HepG2 (cell line): ENCODE measurements at regions of chr2 and their contacts with region 1.

Region 1: DNA sequence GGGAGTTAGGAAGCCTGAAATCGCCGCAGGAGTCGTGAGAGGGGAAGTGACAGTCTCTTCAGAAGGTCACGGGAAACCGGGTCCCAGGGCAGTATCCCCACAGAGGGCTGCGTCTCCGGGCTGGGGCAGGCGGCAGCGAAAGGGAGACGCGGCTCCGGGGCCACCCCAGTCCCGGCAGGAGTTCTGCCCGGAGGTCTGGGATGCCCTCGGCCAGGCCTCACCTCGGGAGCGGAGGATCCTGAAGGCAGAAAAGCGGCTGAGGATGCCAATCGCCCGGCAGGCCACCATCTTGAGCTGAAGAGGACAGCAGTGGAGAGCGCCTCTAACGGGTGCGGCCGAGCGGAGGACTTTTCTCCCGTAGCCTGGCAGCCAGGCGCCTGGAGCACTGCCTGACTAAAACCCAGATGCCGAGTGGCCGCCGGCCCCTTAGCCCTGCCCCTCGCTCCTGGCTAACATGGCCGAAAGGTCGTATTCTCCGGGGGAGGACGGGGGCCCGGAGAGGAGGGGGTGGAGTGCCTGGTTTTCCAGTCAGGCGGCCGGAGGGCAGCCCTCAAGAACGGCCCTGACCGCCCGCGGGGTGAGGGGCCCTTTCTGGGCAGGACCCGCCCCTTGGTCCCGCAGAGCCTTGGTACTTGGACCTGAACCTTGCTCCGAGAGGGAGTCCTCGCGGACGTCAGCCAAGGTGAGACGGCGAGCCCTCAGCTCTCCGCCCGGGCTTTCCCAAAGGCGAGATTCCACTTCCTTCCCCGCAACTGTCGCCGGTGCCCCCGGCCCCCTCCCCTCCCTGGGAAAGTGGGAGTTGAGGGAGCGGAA is at the starts of genes HADHA and HADHB:
- DNase-seq: peak; percentile 95
- ATAC-seq: peak; percentile 94
- H3K4me3 ChIP-seq: peak within 1 kb of the TSS; percentile 62 to 96 (median 94)
- H3K27ac ChIP-seq: peak within 1 kb of the TSS; percentile 91
- H3K4me1 ChIP-seq: peaks cover 59% of the 10 kb centered on the region
- H3K27me3 ChIP-seq: peaks cover 0 to 7% of the 10 kb centered on the region in 2 experiments; a peak in 2 of 5 replicates
- CTCF ChIP-seq: peak; percentile 57
- EP300 ChIP-seq: peak; percentile 49 to 52
- POLR2A ChIP-seq: peak; percentile 94 to 98
- RAD21 ChIP-seq: peak; percentile 14; the same call in 1 of the 2 replicates
- total RNA-seq, gene HADHA: 270 and 385 TPM in 2 replicates
- total RNA-seq, gene HADHB: 238 and 304 TPM in 2 replicates

Region 2: DNA sequence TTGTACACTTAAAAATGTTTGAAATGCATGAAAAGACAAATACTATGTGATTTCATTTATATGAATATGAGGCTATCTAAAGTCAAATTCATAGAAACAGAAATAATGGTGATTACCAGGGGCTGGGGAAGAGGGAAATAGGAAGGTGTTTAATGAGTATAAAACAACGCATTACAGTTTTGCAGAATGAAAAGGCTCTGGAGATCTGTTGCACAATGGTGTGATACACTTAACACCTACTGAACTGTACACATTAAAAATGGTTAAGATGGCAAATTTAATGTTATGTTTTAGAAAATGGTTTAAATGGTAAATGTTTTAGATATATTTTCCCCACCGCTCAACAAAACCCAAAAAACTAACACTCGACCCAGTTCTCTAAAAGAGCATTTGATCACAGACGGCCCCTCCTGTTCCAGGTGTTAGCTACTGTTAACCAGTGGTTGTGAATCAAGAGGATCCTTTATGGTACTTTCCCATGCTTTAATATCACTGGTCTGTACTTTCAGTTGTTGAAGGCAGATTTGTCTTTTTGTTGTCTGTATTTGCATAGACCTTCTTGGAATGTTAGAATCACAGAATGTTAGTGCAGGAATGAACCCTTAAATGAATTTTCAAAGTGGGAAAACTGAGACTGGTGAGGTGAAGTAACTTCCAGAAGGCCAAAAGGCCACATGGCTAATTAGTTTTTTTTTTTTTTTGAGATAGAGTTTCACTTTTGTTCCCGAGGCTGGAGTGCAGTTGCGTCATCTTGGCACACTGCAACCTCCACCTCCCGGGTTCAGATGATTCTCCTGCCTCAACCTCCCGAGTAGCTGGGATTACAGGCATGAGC is 200.4 kb before region 1 on chr2:
- CTCF ChIA-PET with region 1: no interaction called
- POLR2A ChIA-PET with region 1: no interaction called
- in situ Hi-C with region 1: no loop called
- intact Hi-C with region 1: no loop called
- DNase-seq: peak; percentile 54
- ATAC-seq: peak; percentile 45
- H3K4me3 ChIP-seq: peak overlapping the region in 1 of 3 experiments; percentile 2; a peak in 1 of 6 replicates
- H3K27ac ChIP-seq: peak overlapping the region; percentile 54
- H3K4me1 ChIP-seq: peaks cover 79% of the 10 kb centered on the region
- H3K27me3 ChIP-seq: no peaks in the 10 kb centered on the region
- CTCF ChIP-seq: no peak
- EP300 ChIP-seq: no peak
- POLR2A ChIP-seq: no peak
- RAD21 ChIP-seq: no peak

Region 3: GRCh38 chr2:26095758-26096157 is 148.8 kb before region 1 on chr2:
- CTCF ChIA-PET with region 1: no interaction called
- POLR2A ChIA-PET with region 1: no interaction called
- in situ Hi-C with region 1: no loop called
- intact Hi-C with region 1: no loop called
- DNase-seq: no peak
- ATAC-seq: no peak
- H3K4me3 ChIP-seq: no peak overlapping the region
- H3K27ac ChIP-seq: no peak overlapping the region
- H3K4me1 ChIP-seq: peaks cover 17% of the 10 kb centered on the region
- H3K27me3 ChIP-seq: no peaks in the 10 kb centered on the region
- CTCF ChIP-seq: no peak
- EP300 ChIP-seq: no peak
- POLR2A ChIP-seq: no peak
- RAD21 ChIP-seq: no peak

Region 4: DNA sequence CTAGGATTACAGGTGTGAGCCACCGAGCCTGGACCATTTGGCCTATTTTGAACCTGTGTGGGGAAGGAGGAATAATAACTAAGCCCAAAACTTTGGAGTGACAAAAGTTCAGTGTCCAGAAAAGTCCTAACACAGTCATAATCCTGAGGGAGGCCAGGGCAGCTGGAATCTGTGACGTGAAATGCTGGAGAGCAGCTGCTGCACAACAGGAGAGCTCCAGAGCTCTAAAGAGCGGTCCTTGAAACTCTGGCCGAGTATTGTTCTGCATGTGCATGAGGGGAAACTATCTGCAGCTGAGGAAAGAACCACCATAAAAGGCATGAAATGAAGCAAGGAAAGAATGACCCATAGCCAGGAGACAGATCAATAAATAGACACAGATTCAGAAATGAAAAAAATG is 27.9 kb before region 1 on chr2:
- CTCF ChIA-PET with region 1: no interaction called
- POLR2A ChIA-PET with region 1: no interaction called
- in situ Hi-C with region 1: no loop called
- intact Hi-C with region 1: no loop called
- DNase-seq: no peak
- ATAC-seq: no peak
- H3K4me3 ChIP-seq: no peak overlapping the region
- H3K27ac ChIP-seq: no peak overlapping the region
- H3K4me1 ChIP-seq: no peaks in the 10 kb centered on the region
- H3K27me3 ChIP-seq: no peaks in the 10 kb centered on the region
- CTCF ChIP-seq: no peak
- EP300 ChIP-seq: no peak
- POLR2A ChIP-seq: no peak
- RAD21 ChIP-seq: no peak

Region 5: GRCh38 chr2:26255759-26256384 is 11.4 kb after region 1 on chr2:
- CTCF ChIA-PET with region 1: no interaction called
- POLR2A ChIA-PET with region 1: interaction called, 19 read pairs
- in situ Hi-C with region 1: no loop called
- intact Hi-C with region 1: no loop called
- DNase-seq: no peak
- ATAC-seq: no peak
- H3K4me3 ChIP-seq: no peak overlapping the region
- H3K27ac ChIP-seq: no peak overlapping the region
- H3K4me1 ChIP-seq: peaks cover 30% of the 10 kb centered on the region
- H3K27me3 ChIP-seq: no peaks in the 10 kb centered on the region
- CTCF ChIP-seq: no peak
- EP300 ChIP-seq: no peak
- POLR2A ChIP-seq: no peak
- RAD21 ChIP-seq: no peak

Region 6: DNA sequence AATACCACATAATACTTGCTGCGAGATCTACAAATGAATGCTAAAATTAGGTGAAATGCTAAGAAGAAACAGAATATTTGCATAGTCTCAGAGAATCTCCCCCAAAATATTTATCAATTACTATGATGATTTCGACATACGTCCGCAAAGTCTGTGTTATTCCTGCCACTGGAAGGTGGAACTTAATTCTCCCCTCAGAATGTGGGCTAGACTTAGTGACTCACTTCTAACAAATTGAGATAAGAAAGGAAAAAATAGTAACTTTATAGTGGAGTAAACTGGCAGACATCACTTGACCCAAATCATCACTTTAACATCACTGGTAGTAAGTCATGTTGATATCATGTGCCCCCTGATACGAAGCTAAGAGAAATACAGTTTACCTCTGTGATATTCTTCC is 23.7 kb after region 1 on chr2:
- CTCF ChIA-PET with region 1: no interaction called
- POLR2A ChIA-PET with region 1: interaction called, 19 read pairs
- in situ Hi-C with region 1: no loop called
- intact Hi-C with region 1: no loop called
- DNase-seq: no peak
- ATAC-seq: no peak
- H3K4me3 ChIP-seq: no peak overlapping the region
- H3K27ac ChIP-seq: no peak overlapping the region
- H3K4me1 ChIP-seq: 0 out of 2 replicates have a peak, but pooled peaks cover under 1% of the 10 kb centered on the region
- H3K27me3 ChIP-seq: no peaks in the 10 kb centered on the region
- CTCF ChIP-seq: no peak
- EP300 ChIP-seq: no peak
- POLR2A ChIP-seq: no peak
- RAD21 ChIP-seq: no peak

Region 7: DNA sequence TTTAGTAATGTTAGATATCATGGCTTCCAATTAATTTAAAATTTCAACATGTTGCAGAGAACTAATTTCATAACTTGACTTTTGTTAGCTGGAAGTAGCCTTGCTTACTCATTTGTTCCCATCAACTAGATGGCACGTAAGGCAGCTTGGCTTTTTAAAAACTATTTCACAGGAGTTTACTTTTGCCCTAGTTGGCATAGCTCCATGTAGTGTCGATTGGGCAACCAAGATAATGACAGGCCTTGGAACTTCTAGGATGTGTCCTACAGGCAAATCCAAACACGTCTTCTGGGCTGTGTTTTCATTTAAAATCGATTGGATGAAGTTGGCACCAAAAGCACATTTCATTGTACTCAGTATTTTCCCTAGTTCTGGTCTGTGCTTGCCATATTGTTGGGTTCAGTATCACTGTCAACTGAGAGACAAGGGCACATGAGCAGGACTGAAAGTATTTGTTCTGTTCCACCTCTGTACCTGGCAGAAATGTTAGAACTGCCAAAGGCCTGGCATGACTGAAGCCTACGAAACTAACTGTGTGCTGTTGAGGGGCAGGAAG is 29.6 kb after region 1 on chr2:
- CTCF ChIA-PET with region 1: no interaction called
- POLR2A ChIA-PET with region 1: interaction called, 33 read pairs
- in situ Hi-C with region 1: no loop called
- intact Hi-C with region 1: loop called (anchors 2 kb)
- DNase-seq: peak; percentile 78
- ATAC-seq: peak; percentile 80
- H3K4me3 ChIP-seq: no peak overlapping the region
- H3K27ac ChIP-seq: peak overlapping the region; percentile 29
- H3K4me1 ChIP-seq: peaks cover 14% of the 10 kb centered on the region
- H3K27me3 ChIP-seq: no peaks in the 10 kb centered on the region
- CTCF ChIP-seq: no peak
- EP300 ChIP-seq: peak in 1 of 2 experiments; percentile 58; a peak in 2 of 4 replicates
- POLR2A ChIP-seq: no peak
- RAD21 ChIP-seq: no peak

Region 8: GRCh38 chr2:26299471-26300101 is 55.1 kb after region 1 on chr2:
- CTCF ChIA-PET with region 1: no interaction called
- POLR2A ChIA-PET with region 1: interaction called, 32 read pairs
- in situ Hi-C with region 1: no loop called
- intact Hi-C with region 1: no loop called
- DNase-seq: peak; percentile 23
- ATAC-seq: peak; percentile 50
- H3K4me3 ChIP-seq: peak overlapping the region; percentile 65 to 81 (median 73)
- H3K27ac ChIP-seq: no peak overlapping the region
- H3K4me1 ChIP-seq: peaks cover 27% of the 10 kb centered on the region
- H3K27me3 ChIP-seq: peaks cover 2 to 38% of the 10 kb centered on the region in 2 experiments; a peak in 4 of 5 replicates
- CTCF ChIP-seq: no peak
- EP300 ChIP-seq: no peak
- POLR2A ChIP-seq: no peak
- RAD21 ChIP-seq: no peak

Region 9: GRCh38 chr2:26345545-26346453 is 101.3 kb after region 1 on chr2 and contains the start of gene SELENOI:
- CTCF ChIA-PET with region 1: no interaction called
- POLR2A ChIA-PET with region 1: interaction called, 38 read pairs
- in situ Hi-C with region 1: no loop called
- intact Hi-C with region 1: no loop called
- DNase-seq: peak; percentile 100
- ATAC-seq: peak; percentile 95
- H3K4me3 ChIP-seq: peak within 1 kb of the TSS; percentile 89 to 96 (median 94)
- H3K27ac ChIP-seq: peak within 1 kb of the TSS; percentile 97
- H3K4me1 ChIP-seq: peaks cover 63% of the 10 kb centered on the region
- H3K27me3 ChIP-seq: no peaks in the 10 kb centered on the region; a peak in 1 of 5 replicates
- CTCF ChIP-seq: no peak; the same call in 1 of the 2 replicates
- EP300 ChIP-seq: peak; percentile 46 to 56; a peak in 3 of 4 replicates
- POLR2A ChIP-seq: peak; percentile 94 to 99
- RAD21 ChIP-seq: peak; percentile 33; the same call in 1 of the 2 replicates
- total RNA-seq, gene SELENOI: 60.3 and 66.0 TPM in 2 replicates

Region 10: GRCh38 chr2:26785431-26786206 is 541.1 kb after region 1 on chr2 and contains the start of gene CENPA:
- CTCF ChIA-PET with region 1: no interaction called
- POLR2A ChIA-PET with region 1: no interaction called
- in situ Hi-C with region 1: no loop called
- intact Hi-C with region 1: loop called (anchors 5 kb)
- DNase-seq: peak; percentile 100
- ATAC-seq: peak; percentile 99
- H3K4me3 ChIP-seq: peak within 1 kb of the TSS; percentile 91 to 92 (median 91)
- H3K27ac ChIP-seq: peak within 1 kb of the TSS; percentile 60
- H3K4me1 ChIP-seq: peaks cover 51% of the 10 kb centered on the region
- H3K27me3 ChIP-seq: no peaks in the 10 kb centered on the region; a peak in 1 of 5 replicates
- CTCF ChIP-seq: peak; percentile 26
- EP300 ChIP-seq: peak in 1 of 2 experiments; percentile 6; a peak in 1 of 4 replicates
- POLR2A ChIP-seq: peak; percentile 68 to 70
- RAD21 ChIP-seq: peak; percentile 63
- total RNA-seq, gene CENPA: 38.5 and 45.8 TPM in 2 replicates